ENCODE measurements at regions of chr10 and their contacts with region 1.

Region 1: GRCh38 chr10:17010363-17011145 is 119.1 kb downstream of the CUBN start:
- DNase-seq: no peak

Region 2: DNA sequence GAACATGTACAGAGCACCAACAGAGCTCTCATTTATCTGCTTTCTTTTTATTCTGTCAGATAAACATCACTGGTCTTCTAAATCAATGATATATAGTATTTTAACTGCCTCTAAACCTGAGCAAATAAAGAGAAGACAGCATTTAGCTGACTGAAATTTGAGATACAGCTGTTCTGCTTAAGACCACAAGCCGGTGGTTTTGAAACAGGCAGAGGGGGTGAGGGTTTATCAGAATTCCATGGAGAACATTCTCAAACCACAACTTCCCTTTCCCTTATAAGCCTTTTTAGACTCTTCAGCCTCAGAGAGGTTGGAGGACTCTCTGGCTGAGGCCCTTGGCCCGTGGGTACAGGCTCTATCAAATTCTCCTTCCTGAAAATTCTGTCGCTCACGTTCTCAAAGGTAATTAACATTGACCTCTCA is 105.9 kb before region 1 on chr10:
- intact Hi-C with region 1: no loop called
- DNase-seq: no peak

Region 3: GRCh38 chr10:16965740-16966447 is 44.7 kb before region 1 on chr10:
- intact Hi-C with region 1: loop called in 1 of 2 experiments (anchors 10 kb)
- DNase-seq: no peak

Region 4: DNA sequence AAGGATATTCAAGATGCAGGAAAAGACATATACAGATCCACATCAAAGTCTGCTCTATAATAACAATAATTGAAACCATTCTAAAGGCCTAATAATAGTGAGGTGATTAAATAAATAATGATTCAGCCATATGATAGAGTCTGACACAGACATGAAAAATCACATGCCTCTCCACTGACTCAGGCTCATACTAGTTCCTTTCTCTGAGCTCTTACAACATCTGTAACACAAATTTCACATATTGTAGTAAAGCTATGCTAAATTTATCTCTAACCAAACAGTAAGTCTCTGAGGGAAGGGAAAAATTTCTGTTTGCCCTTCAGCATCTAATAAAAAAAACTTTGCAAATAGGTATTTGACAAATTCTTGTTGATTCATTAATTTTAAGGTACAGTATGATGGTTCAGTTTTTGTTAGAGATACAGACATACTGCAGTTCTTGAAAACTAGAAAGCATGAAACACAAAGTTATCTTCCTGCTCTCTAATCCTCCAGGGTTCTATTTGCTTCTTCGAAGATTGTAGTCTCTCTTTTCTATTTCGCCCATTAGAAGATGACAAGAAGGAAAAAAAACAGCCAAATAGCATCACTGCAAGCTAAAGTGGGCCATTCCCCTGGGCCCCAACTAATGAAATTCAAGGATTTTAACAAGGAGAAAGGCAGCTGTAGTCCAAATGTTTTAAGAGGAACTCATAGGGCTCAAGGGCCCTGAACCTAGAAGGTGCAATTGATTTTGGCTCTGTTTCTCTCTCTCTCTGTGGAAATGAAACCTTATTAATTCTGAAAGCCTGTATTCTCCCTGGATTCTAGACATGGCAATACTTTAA is 65.2 kb after region 1 on chr10:
- intact Hi-C with region 1: no loop called
- DNase-seq: no peak